ENCODE measurements at regions of chr10 and their contacts with region 1.

Region 1: DNA sequence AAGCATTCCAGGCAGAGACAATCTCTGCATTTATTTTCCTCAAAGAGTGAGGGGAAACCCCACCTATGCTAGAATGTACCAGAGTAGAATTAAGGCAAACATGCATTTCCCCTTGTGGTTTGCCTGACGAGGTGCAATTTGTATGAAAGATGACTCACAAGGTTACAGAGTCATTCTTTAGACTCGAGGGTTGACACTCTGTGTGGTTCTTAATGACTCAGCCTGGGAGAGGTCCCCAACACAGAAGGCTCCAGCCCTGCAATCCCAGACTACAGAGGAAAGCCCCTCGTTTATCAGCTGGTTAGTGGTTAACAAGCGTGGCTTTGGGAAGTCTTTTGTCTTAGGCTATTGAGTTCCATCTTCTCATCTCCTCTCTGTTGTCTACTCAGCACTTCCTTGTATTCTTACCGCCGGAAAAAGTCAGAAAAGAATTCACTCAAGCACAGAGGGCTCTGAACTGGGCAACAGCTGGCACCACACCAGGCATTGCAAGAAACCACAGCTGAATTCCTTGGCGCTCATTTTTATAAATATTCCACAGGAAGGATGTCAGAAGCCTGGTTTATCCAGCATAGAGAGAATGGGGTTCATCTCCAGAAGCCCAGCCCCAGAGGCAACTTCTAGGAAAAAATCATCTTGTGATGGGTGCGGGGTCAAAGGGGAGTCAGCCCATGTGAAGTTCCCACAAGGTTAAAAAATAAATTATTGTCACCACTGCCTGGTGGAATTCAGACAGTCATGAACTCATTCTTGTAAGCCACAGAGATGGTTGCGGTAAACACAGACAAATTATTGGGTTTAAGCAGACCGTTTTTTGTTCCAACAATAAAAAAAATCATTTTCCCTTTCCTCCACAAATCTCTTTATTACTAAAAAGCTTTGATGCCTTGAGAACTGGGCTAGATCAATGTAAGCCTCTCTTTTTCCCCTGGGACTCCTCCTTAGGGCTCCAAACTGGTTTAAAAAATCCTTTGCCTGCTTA is 24.5 kb upstream of the SVIL start:
- DNase-seq: peak in 1 of 2 donors; percentile 59
- ATAC-seq: peak; percentile 90 to 95
- H3K4me3 ChIP-seq: no peak overlapping the region
- H3K27ac ChIP-seq: peak overlapping the region; percentile 67 to 82 (median 72)
- H3K4me1 ChIP-seq: peaks cover 20 to 38% of the 10 kb centered on the region in 2 donors
- H3K27me3 ChIP-seq: no peaks in the 10 kb centered on the region
- CTCF ChIP-seq: peak in 4 of 5 experiments; percentile 24 to 69 (median 40)
- POLR2A ChIP-seq: peak; percentile 24 to 50

Region 2: GRCh38 chr10:29725133-29725720 is 66.0 kb after region 1 on chr10:
- in situ Hi-C with region 1: loop called in 1 of 4 experiments (anchors 10 kb)
- intact Hi-C with region 1: no loop called
- DNase-seq: no peak
- ATAC-seq: no peak
- H3K4me3 ChIP-seq: no peak overlapping the region
- H3K27ac ChIP-seq: peak overlapping the region in 3 of 4 donors; percentile 4 to 39 (median 35)
- H3K4me1 ChIP-seq: peaks cover 35 to 46% of the 10 kb centered on the region in 2 donors
- H3K27me3 ChIP-seq: no peaks in the 10 kb centered on the region
- CTCF ChIP-seq: no peak
- POLR2A ChIP-seq: no peak

Region 3: GRCh38 chr10:31215052-31215451 is 1555.8 kb after region 1 on chr10:
- in situ Hi-C with region 1: no loop called
- intact Hi-C with region 1: no loop called
- DNase-seq: no peak
- ATAC-seq: no peak
- H3K4me3 ChIP-seq: no peak overlapping the region
- H3K27ac ChIP-seq: no peak overlapping the region
- H3K4me1 ChIP-seq: peaks cover 2 to 4% of the 10 kb centered on the region in 2 donors
- H3K27me3 ChIP-seq: no peaks in the 10 kb centered on the region
- CTCF ChIP-seq: no peak
- POLR2A ChIP-seq: no peak

Measured in gastrocnemius medialis (tissue), 4 donors.